ENCODE measurements at regions of chr16 and their contacts with region 1.

Region 1: GRCh38 chr16:1959269-1960049 is at the start of gene NDUFB10:
- DNase-seq: peak; percentile 85
- ATAC-seq: peak; percentile 64
- H3K4me3 ChIP-seq: peak within 1 kb of the TSS; percentile 81 to 89
- H3K27ac ChIP-seq: peak within 1 kb of the TSS; percentile 88
- H3K4me1 ChIP-seq: peaks cover 8 to 41% of the 10 kb centered on the region in 2 experiments
- H3K27me3 ChIP-seq: no peaks in the 10 kb centered on the region
- CTCF ChIP-seq: peak in 2 of 3 experiments; percentile 60 to 61; a peak in 4 of 6 replicates
- POLR2A ChIP-seq: peak; percentile 89
- RAD21 ChIP-seq: no peak
- total RNA-seq, gene NDUFB10: 273 TPM

Region 2: DNA sequence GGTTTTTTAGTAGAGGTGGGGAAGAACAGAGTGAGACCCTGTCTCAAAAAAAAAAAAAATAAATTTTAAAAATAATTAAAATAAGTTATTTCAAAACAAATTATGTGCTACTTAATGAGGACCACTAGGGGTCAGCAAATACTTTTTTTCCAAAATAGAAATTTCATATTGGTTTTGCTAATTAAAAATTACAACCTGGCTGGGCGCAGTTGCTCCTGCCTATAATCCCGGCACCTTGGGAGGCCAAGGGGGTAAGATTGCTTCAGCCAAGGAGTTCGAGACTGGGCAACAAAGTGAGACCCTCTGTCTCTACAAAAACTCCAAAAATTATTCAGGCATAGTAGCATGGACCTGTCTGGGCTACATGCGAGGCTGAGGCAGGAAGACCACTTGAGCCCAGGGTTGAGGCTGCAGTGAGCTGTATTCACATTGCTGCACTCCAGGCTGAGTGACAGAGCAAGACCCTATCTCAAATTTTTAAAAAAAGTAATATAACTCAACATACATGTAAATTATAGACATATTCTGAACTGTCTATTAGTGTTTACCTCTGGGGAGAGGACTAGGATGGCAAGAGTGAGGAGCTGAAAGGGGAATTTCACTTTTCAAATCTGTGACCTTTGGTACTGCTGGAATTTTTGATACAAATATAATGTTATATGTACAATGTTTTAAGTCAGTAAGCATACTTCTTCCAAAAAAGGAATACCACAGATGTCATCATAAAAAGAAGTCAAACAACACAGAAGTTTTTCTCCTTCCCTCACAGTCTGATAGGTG is 95.6 kb before region 1 on chr16:
- CTCF ChIA-PET with region 1: interaction called, 5 read pairs
- POLR2A ChIA-PET with region 1: interaction called, 12 read pairs
- RAD21 ChIA-PET with region 1: interaction called in 1 of 2 experiments, 3 read pairs
- intact Hi-C with region 1: no loop called
- DNase-seq: peak; percentile 40
- ATAC-seq: peak; percentile 65
- H3K4me3 ChIP-seq: no peak overlapping the region
- H3K27ac ChIP-seq: no peak overlapping the region
- H3K4me1 ChIP-seq: peaks cover 11% of the 10 kb centered on the region in 2 experiments; a peak in 3 of 4 replicates
- H3K27me3 ChIP-seq: no peaks in the 10 kb centered on the region
- CTCF ChIP-seq: peak; percentile 33 to 90 (median 42); a peak in 4 of 6 replicates
- POLR2A ChIP-seq: no peak
- RAD21 ChIP-seq: peak; percentile 82

Region 3: DNA sequence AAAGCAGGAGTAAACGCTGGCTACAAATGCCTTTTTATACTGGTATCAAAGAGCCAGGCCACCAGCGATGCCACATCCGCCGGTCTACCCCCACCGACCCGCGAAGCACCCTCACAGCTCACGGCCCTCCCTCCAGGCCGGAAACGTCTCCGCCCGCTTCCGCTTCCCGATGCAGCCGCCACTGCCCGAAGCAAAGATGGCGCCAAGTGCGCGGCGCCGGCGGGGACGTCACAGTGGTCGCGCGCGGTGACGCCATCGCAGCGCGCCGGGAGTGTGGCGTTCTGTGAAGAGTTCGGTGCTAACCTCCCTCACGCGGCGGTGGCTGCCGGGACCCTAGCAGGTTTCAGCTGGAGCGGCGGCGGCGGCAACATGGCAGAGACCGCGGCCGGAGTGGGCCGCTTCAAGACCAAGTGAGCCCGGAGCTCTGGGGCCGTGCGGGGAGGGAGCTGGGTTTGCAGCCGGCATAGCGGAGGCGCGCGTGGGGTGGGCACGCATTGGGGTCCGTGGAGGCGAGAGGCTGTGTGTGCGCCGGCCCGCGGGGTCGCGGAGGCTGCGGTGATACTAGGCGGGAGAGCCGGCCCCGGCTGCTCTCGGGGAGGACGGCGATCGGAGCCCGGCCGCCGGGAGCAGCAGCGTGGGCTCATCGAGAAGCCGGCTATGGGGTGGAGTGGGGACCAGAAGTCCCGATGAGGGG is 12.5 kb after region 1 on chr16 and contains the start of gene TBL3:
- CTCF ChIA-PET with region 1: no interaction called
- POLR2A ChIA-PET with region 1: interaction called, 104 read pairs
- RAD21 ChIA-PET with region 1: no interaction called
- intact Hi-C with region 1: no loop called
- DNase-seq: peak; percentile 83
- ATAC-seq: peak; percentile 85
- H3K4me3 ChIP-seq: peak within 1 kb of the TSS; percentile 75 to 96
- H3K27ac ChIP-seq: peak within 1 kb of the TSS; percentile 95
- H3K4me1 ChIP-seq: peaks cover 7 to 16% of the 10 kb centered on the region in 2 experiments
- H3K27me3 ChIP-seq: no peaks in the 10 kb centered on the region
- CTCF ChIP-seq: no peak
- POLR2A ChIP-seq: peak; percentile 85
- RAD21 ChIP-seq: no peak
- total RNA-seq, gene TBL3: 68.9 TPM

Region 4: GRCh38 chr16:1983544-1984346 is 24.3 kb after region 1 on chr16 and contains the start of gene GFER:
- CTCF ChIA-PET with region 1: interaction called, 3 read pairs
- POLR2A ChIA-PET with region 1: interaction called, 104 read pairs
- RAD21 ChIA-PET with region 1: no interaction called
- intact Hi-C with region 1: no loop called
- DNase-seq: peak; percentile 85
- ATAC-seq: peak; percentile 74
- H3K4me3 ChIP-seq: peak within 1 kb of the TSS; percentile 84 to 97
- H3K27ac ChIP-seq: peak within 1 kb of the TSS; percentile 84
- H3K4me1 ChIP-seq: peaks cover 45 to 62% of the 10 kb centered on the region in 2 experiments
- H3K27me3 ChIP-seq: no peaks in the 10 kb centered on the region
- CTCF ChIP-seq: peak in 2 of 3 experiments; percentile 14 to 20; a peak in 3 of 6 replicates
- POLR2A ChIP-seq: no peak
- RAD21 ChIP-seq: no peak
- total RNA-seq, gene GFER: 47.3 TPM

Region 5: GRCh38 chr16:2016407-2016922 is 57.0 kb after region 1 on chr16:
- CTCF ChIA-PET with region 1: no interaction called
- POLR2A ChIA-PET with region 1: no interaction called
- RAD21 ChIA-PET with region 1: no interaction called
- intact Hi-C with region 1: no loop called
- DNase-seq: no peak
- ATAC-seq: no peak
- H3K4me3 ChIP-seq: no peak overlapping the region
- H3K27ac ChIP-seq: no peak overlapping the region; the same call in 1 of the 2 replicates
- H3K4me1 ChIP-seq: peaks cover 24 to 42% of the 10 kb centered on the region in 2 experiments
- H3K27me3 ChIP-seq: no peaks in the 10 kb centered on the region
- CTCF ChIP-seq: peak in 2 of 3 experiments; percentile 68 to 73; a peak in 5 of 6 replicates
- POLR2A ChIP-seq: no peak
- RAD21 ChIP-seq: no peak

Measured in HCT116 (cell line).